Testis (tissue), 5 donors: ENCODE measurements at regions of chr6 and their contacts with region 1.

Region 1: GRCh38 chr6:97925504-97925903 is 642.5 kb upstream of the MMS22L start:
- DNase-seq: no peak
- H3K4me3 ChIP-seq: no peak overlapping the region
- H3K27ac ChIP-seq: no peak overlapping the region
- H3K4me1 ChIP-seq: no peaks in the 10 kb centered on the region
- H3K27me3 ChIP-seq: no peaks in the 10 kb centered on the region
- CTCF ChIP-seq: no peak
- POLR2A ChIP-seq: no peak

Region 2: GRCh38 chr6:97850458-97851212 is 74.9 kb before region 1 on chr6:
- intact Hi-C with region 1: no loop called
- DNase-seq: no peak
- H3K4me3 ChIP-seq: no peak overlapping the region
- H3K27ac ChIP-seq: no peak overlapping the region
- H3K4me1 ChIP-seq: no peaks in the 10 kb centered on the region
- H3K27me3 ChIP-seq: no peaks in the 10 kb centered on the region
- CTCF ChIP-seq: no peak
- POLR2A ChIP-seq: no peak

Region 3: GRCh38 chr6:98067375-98067774 is 141.9 kb after region 1 on chr6:
- intact Hi-C with region 1: loop called (anchors 10 kb)
- DNase-seq: no peak
- H3K4me3 ChIP-seq: no peak overlapping the region
- H3K27ac ChIP-seq: no peak overlapping the region
- H3K4me1 ChIP-seq: no peaks in the 10 kb centered on the region
- H3K27me3 ChIP-seq: no peaks in the 10 kb centered on the region
- CTCF ChIP-seq: no peak
- POLR2A ChIP-seq: no peak